Dendritic cell treated with granulocyte-macrophage colony-stimulating factor and Interleukin-4, amounts not matched to agents 40 ng/mL and 50 ng/mL, for 4 days (primary cell): ENCODE measurements at regions of chr17 and their contacts with region 1.

Region 1: DNA sequence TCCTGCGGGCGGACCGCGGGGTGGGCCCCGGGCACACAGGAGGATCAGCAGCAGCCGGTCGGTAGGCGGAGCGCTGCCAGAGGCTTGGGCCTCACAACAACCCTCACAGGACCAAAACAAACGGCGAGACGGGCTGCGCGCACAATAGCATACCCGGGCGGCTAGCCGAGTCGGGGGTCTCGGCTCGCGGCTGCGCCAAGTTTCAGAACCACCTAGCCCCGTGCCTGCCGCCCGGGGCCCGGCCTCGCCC is 747 bp downstream of the ULK2 start:
- H3K4me3 Mint-ChIP-seq: peak overlapping the region; percentile 89
- H3K27ac Mint-ChIP-seq: peak overlapping the region; percentile 76
- H3K4me1 Mint-ChIP-seq: peaks cover 12% of the 10 kb centered on the region
- H3K27me3 Mint-ChIP-seq: no peaks in the 10 kb centered on the region

Region 2: GRCh38 chr17:19805006-19805405 is 62.0 kb before region 1 on chr17:
- intact Hi-C with region 1: no loop called
- H3K4me3 Mint-ChIP-seq: no peak overlapping the region
- H3K27ac Mint-ChIP-seq: no peak overlapping the region
- H3K4me1 Mint-ChIP-seq: no peaks in the 10 kb centered on the region
- H3K27me3 Mint-ChIP-seq: no peaks in the 10 kb centered on the region

Region 3: DNA sequence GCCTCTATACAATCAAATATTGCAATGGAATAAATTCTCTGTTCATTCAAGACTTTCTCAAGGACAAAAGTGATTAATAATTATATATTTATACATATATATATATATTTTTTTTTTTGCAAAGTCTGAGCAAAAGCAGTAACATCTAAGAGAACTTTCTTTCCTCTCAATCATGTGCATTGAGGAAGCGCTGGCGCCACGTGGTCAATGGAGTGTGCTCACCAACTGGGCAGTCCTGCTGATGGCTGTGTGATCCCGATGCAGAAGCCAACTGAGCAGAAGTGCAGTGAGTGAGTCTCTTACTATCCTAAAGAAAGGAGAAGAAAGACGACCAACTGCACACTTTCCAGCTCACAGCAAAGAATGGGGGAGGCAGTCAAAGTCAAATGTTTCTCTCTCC is 37.9 kb after region 1 on chr17:
- intact Hi-C with region 1: loop called (anchors 2 kb)
- H3K4me3 Mint-ChIP-seq: no peak overlapping the region
- H3K27ac Mint-ChIP-seq: peak overlapping the region; percentile 74
- H3K4me1 Mint-ChIP-seq: peaks cover 31% of the 10 kb centered on the region
- H3K27me3 Mint-ChIP-seq: no peaks in the 10 kb centered on the region

Region 4: GRCh38 chr17:19928299-19928698 is 61.3 kb after region 1 on chr17:
- intact Hi-C with region 1: loop called (anchors 5 kb)
- H3K4me3 Mint-ChIP-seq: no peak overlapping the region
- H3K27ac Mint-ChIP-seq: no peak overlapping the region
- H3K4me1 Mint-ChIP-seq: peaks cover 3% of the 10 kb centered on the region
- H3K27me3 Mint-ChIP-seq: no peaks in the 10 kb centered on the region

Region 5: DNA sequence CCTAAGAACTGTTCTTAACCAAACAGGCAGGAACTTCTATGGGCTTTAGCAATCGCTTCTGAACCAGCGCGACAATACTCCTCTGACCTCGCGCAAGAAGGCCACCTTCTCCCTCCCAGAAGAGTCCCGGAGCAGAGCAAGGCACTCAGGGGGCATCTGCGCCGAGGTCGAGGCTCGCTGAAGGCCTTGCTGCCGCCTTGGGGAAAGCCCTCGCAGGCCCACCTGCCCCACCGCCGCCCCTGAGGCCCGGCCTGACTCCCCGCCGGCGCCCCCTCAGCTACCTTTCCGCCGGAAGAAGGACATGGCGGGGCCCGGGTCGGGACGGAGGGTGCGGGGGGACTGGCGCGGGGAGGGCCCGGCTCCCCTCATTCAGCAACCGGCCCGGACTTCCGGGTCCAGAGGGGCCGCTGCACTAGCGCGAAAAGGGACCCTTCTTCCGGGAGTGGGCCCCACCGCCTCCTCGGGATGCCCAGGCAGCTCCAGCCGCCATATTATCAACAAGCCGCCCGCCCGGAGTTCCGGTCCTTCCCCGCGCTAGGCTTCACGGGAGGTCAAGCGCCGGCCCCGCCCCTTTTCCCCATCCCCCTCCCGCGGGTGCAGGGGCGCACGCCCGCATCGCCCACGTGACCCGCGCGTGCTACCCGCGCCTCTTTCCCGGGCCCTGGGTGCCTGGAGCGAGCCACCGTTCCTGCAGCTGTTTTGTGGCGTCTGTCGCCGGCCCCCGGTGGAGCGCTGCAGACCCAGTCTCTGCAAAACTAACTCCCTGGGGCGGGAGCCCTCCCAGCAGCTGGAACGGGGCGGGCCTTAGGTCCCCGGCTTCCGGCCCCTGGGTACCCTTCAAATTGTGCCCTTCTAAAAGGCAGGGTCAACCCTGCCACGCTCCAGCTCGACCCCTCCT is 110.6 kb after region 1 on chr17 and contains the start of gene AKAP10:
- intact Hi-C with region 1: no loop called
- H3K4me3 Mint-ChIP-seq: peak within 1 kb of the TSS; percentile 84
- H3K27ac Mint-ChIP-seq: peak within 1 kb of the TSS; percentile 97
- H3K4me1 Mint-ChIP-seq: peaks cover 68% of the 10 kb centered on the region
- H3K27me3 Mint-ChIP-seq: no peaks in the 10 kb centered on the region